ENCODE measurements at regions of chrX and their contacts with region 1.

Region 1: GRCh38 chrX:53422086-53422860 is at the start of gene SMC1A:
- DNase-seq: peak; percentile 98

Region 2: GRCh38 chrX:53281321-53281822 is 140.9 kb before region 1 on chrX and contains the start of gene IQSEC2:
- CTCF ChIA-PET with region 1: interaction called, 3 read pairs
- POLR2A ChIA-PET with region 1: interaction called, 13 read pairs
- DNase-seq: peak; percentile 77

Region 3: DNA sequence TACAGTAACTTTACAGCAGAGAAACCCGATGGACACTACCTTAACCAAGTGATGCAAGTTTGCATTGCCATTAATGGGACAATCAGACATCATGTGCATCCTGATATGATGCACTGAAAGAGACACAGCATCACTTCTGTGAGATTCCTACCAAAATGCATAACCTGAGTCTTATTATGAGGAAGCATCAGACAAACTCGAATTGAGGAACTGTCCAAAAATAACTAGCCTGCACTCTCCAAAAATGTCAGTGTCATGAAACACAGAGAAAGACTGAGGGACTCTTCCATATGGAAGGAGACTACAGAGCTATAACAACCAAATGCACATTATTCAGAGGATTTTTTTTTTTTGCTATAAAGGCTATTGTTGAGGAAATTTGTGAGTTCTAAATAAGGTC is 74.3 kb before region 1 on chrX:
- CTCF ChIA-PET with region 1: no interaction called
- POLR2A ChIA-PET with region 1: no interaction called
- DNase-seq: no peak

Region 4: DNA sequence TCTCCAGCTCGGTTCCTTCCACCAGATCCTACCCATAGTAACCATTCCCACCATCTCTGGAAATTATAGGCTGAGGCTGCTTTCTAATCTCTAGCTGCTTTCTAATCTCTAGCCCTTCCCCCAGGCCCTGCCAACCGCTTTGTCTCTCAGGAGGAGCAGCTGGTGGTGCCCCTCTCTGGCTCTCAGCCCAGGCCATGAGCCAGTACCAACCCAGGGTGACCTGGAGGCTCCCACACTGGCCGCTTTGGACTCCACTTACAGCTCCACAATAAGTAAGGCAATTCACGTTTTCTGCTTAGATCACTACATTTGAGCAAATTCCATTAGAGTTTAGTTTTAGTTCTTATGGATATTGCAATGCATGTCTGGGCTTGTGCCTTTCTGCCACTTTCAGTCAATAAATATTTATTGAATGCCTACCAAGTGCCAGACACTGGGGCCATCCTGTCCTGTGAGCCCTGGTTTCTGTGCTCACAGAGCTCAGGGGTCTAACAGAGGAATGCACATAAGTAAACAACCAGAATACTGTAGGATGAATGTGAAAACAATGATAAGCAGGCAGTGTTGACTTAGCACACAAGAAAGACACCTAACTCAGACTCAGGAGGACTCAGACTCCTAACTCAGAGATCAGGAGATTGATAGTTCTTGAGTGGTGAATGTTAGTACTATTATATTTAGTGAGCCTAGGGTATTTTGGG is 38.7 kb before region 1 on chrX:
- CTCF ChIA-PET with region 1: no interaction called
- POLR2A ChIA-PET with region 1: interaction called, 10 read pairs
- DNase-seq: no peak

Region 5: DNA sequence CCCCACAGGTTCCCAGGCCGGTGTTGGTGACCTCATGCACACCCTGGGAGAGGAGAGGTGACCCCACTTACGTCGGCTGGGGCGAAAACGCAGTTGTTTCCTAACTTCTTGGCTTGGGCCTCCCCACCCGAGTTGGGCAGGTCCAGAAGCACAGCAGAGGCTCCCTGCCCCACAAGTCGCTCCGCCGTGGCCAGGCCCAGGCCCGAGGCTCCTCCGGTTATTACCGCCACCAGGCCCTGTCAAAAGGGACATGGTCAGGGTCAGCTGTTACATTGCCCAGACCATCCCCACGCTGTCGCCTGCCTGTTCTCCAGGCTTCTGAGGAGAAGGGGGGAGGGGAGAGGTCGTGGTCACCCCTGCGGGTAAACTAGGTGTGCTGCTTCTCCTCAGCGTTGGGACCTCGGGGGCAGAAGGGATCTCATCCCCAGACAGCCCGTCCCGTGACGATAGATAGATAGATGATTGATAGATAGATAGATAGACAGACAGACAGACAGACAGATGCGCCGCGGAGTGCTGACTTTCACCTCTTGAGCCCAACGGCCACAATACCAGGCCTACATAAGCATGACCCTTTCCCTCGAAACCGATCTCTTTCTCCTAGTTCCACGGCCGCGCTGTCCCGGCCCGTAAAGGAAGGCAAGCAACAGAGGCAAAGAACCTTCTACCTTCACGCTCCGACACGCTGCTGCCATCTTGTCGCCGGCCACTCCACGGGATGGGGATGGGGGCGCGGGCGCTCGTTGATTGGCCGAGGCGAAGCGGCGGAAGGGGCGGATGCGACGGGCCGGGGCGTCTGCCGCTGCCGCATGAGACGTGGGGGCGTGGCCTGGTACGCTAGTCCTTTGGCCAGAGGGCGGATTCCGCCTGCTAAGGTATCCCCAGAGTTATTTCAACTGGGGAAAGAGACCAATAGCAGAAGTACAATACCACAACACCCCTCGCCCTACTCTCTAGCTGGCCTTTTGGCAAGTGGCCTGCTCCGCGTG is 11.7 kb after region 1 on chrX and contains the start of gene HSD17B10:
- CTCF ChIA-PET with region 1: interaction called, 8 read pairs
- POLR2A ChIA-PET with region 1: interaction called, 40 read pairs
- DNase-seq: peak; percentile 87

Region 6: DNA sequence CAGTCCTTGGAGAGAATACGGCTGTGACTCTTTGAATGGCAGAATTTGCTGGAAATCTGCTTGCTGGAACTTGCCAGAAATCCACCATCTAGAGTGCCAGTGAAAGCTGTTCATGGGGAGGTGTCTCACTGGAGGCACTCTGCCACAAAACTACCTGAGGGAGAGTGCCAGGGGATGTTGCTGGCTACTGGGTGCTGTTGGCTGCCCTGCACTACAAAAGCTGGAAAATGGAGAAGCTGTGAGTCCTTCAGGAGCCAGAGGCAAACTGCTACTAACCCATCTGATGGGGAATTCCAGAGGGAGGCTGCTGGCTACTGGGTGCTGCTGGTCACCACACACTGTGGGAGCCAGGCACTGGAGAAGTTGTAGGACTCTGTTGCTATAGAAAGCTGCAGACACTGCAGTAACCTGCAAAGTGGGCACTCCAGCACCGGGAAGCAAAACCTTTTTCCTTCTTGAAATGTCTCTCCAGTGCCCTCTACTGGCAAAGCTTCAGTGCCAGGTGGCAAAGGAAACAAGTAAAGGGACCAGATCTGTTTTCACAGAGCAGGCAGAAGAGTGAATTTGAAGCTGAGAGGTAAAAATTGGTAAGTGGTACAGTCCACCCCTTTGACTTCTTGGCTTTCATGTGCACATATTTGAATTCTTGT is 59.7 kb after region 1 on chrX:
- CTCF ChIA-PET with region 1: interaction called, 3 read pairs
- POLR2A ChIA-PET with region 1: interaction called, 10 read pairs
- DNase-seq: peak; percentile 56